CD4-positive, alpha-beta T cell (primary cell): ENCODE measurements at regions of chr7 and their contacts with region 1.

Region 1: DNA sequence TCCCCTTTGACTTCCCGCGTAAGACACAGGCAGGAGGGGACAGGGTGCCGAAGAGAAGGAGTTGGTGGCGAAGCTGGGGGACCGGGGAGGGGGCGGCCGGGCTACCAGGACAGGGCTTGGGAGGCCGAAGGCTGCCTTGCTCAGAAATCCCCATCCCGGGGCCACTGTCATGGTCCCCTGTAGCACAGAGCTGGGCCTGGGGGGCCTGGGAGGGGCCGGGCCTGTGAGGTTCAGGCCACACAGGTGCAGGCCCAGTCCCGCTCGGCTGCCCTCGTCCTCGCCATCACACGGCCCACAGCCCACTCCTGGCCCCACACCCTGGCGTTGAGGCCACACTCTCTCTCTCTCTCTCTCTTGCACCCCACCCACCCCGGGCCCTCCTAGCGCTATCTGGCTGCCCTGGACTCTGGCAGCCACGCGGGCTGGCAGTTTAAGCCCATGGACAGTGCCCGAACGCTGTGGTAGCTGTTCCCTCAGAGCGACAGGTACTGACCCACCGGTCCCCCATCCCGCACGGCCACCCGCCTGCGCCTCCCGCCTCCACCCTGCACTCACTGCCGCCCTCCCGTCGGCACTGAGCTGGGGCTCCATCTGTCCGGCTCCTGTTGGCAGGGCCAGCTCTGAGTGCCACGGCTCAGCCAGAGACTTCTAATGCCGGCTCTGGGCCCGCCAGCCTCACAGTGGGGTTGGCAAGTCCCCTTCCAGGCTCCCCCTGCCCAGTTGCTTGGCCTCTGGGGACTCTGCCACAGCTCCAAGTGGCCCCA is 28.0 kb downstream of the TTYH3 start:
- DNase-seq: no peak
- ATAC-seq: no peak
- H3K4me3 ChIP-seq: no peak overlapping the region
- H3K4me3 Mint-ChIP-seq: no peak overlapping the region
- H3K27ac ChIP-seq: no peak overlapping the region
- H3K27ac Mint-ChIP-seq: no peak overlapping the region
- H3K4me1 ChIP-seq: no peaks in the 10 kb centered on the region
- H3K4me1 Mint-ChIP-seq: no peaks in the 10 kb centered on the region
- H3K27me3 ChIP-seq: no peaks in the 10 kb centered on the region
- H3K27me3 Mint-ChIP-seq: no peaks in the 10 kb centered on the region
- CTCF ChIP-seq: no peak

Region 2: DNA sequence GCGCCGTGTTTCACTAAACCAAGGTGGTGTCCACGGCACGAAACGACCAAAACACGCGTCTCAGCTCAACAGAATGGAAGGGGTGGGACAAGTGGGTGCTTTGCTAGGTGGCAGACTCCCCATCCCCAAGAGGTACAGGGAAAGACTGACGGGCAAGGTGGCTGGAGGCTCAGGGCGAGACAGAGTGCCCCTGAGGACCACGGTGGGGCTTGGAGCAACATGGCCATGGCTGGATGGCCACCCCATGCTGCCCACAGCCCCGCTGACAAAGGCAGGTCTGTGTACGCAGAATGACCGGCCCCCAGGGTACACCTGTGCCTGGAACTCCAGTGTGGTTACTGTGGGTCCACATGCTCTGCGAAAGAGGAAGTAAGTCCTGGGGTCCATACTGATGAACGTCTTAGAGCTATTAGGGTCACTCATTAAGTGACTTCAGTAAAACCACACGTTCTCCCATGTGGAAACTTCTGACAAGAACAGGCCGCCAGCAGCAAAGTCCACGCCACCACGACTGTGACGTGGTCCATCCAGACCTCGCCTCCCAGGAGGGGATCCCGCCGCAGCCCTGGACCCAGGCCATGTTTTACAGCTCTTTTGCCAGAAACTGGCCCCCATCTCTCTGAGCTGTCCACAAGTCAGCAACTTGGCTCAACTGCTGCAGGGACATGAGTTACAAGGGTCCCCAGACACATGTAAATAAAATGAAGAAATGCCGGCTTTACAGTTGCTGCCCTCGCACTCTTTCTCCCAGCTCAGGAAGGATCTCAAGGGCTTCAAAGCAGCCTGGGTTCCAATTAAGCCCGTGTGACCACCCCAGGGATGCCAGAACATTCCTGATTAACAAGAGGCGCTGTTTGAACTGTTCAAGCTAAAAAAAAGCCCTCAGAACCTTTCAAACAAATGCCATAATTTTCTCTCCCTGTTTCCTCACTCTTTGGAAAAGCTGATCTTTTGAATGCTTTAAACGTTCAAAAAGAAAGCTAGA is 493.8 kb before region 1 on chr7:
- CTCF ChIA-PET with region 1: no interaction called
- POLR2A ChIA-PET with region 1: no interaction called
- intact Hi-C with region 1: no loop called
- DNase-seq: no peak
- ATAC-seq: no peak
- H3K4me3 ChIP-seq: no peak overlapping the region
- H3K4me3 Mint-ChIP-seq: no peak overlapping the region
- H3K27ac ChIP-seq: no peak overlapping the region
- H3K27ac Mint-ChIP-seq: no peak overlapping the region
- H3K4me1 ChIP-seq: no peaks in the 10 kb centered on the region
- H3K4me1 Mint-ChIP-seq: no peaks in the 10 kb centered on the region
- H3K27me3 ChIP-seq: no peaks in the 10 kb centered on the region
- H3K27me3 Mint-ChIP-seq: no peaks in the 10 kb centered on the region
- CTCF ChIP-seq: no peak

Region 3: DNA sequence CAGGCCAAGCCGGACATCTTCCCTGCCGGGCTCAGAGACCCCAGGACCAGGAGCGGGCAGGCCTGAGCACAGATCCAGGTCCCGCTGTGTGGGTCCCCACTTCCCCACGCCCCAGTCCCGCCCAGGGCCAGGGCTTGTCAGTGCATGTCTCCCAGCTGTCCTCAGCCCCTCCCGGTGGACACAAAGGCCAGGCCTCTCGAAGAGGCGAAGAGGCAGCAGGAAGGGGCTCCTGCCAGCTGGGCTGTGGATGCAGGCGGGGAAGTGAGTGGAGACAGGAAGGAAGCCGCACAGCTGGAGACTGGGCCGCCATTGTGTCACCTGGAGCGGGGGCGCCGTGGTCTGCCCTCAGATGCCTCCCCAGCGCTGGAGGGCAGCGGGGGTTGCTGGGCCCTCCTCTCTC is 188.3 kb before region 1 on chr7:
- CTCF ChIA-PET with region 1: no interaction called
- POLR2A ChIA-PET with region 1: no interaction called
- intact Hi-C with region 1: no loop called
- DNase-seq: no peak
- ATAC-seq: no peak
- H3K4me3 ChIP-seq: no peak overlapping the region
- H3K4me3 Mint-ChIP-seq: no peak overlapping the region
- H3K27ac ChIP-seq: no peak overlapping the region
- H3K27ac Mint-ChIP-seq: no peak overlapping the region
- H3K4me1 ChIP-seq: peaks cover 7% of the 10 kb centered on the region
- H3K4me1 Mint-ChIP-seq: peaks cover 9% of the 10 kb centered on the region
- H3K27me3 ChIP-seq: no peaks in the 10 kb centered on the region
- H3K27me3 Mint-ChIP-seq: peaks cover 8% of the 10 kb centered on the region
- CTCF ChIP-seq: no peak

Region 4: GRCh38 chr7:2602406-2603043 is 57.2 kb before region 1 on chr7:
- CTCF ChIA-PET with region 1: no interaction called
- POLR2A ChIA-PET with region 1: no interaction called
- intact Hi-C with region 1: no loop called
- DNase-seq: no peak
- ATAC-seq: no peak
- H3K4me3 ChIP-seq: no peak overlapping the region
- H3K4me3 Mint-ChIP-seq: no peak overlapping the region
- H3K27ac ChIP-seq: no peak overlapping the region
- H3K27ac Mint-ChIP-seq: no peak overlapping the region
- H3K4me1 ChIP-seq: no peaks in the 10 kb centered on the region
- H3K4me1 Mint-ChIP-seq: no peaks in the 10 kb centered on the region
- H3K27me3 ChIP-seq: no peaks in the 10 kb centered on the region
- H3K27me3 Mint-ChIP-seq: no peaks in the 10 kb centered on the region
- CTCF ChIP-seq: no peak

Region 5: DNA sequence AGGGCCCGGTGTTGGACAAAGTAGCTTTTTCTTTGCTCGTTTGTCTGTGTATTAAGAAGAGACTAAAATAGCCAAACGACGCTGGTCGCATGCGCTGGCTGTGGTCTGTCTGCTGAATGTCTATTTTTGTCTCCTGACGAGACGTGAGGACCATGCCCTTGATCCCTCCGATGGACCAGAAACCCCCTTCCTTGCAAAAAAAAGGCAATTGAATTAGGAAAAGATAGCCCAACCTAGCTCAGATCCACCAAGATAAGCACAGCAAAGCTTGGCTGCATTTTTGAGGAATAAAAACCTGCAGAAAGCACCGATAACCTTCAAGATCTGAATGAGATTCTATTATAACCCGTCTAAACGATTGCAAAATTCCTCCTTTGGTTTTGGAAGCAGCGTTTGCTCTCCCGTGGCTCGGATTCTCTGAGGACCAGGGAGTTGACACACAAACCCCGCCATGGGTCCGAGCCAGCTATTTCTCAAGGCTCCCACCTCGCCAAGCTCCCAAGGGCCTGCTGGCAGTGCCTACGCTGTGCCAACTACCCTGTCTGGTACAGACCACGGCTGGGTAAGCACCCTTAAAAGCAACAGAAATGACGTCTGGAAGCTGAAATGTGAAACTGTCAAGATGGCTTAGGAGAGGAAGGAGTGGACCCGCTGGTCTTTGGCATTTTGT is 45.7 kb before region 1 on chr7:
- CTCF ChIA-PET with region 1: no interaction called
- POLR2A ChIA-PET with region 1: no interaction called
- intact Hi-C with region 1: loop called in 1 of 2 experiments (anchors 5 kb)
- DNase-seq: no peak
- ATAC-seq: no peak
- H3K4me3 ChIP-seq: no peak overlapping the region
- H3K4me3 Mint-ChIP-seq: no peak overlapping the region
- H3K27ac ChIP-seq: no peak overlapping the region
- H3K27ac Mint-ChIP-seq: no peak overlapping the region
- H3K4me1 ChIP-seq: peaks cover 5% of the 10 kb centered on the region
- H3K4me1 Mint-ChIP-seq: peaks cover 1% of the 10 kb centered on the region
- H3K27me3 ChIP-seq: no peaks in the 10 kb centered on the region
- H3K27me3 Mint-ChIP-seq: no peaks in the 10 kb centered on the region
- CTCF ChIP-seq: no peak